ENCODE measurements at regions of chr2 and their contacts with region 1.

Region 1: DNA sequence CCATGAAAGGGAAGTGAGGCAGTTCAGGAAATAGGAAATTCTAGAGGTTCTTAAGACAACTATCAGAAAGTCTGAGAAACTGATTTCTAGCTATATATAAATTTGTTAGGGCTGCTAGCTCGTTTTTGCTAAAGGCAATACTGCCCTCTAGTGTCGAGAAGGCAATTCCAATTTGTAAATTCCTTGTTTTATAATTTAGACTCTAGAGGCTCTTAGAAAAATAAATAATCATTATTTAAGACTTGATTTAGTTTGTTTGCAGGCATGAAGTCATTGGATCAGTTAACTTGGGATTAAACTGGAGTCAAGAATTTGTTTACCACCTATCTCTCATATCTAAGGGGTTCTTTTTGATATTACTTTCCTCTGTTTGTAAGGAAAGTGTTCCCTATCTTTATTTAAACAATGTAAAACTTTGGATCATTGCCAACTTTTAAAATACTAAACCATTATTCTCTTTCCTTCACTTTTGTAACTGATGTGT is 66.2 kb downstream of the ACVR2A start:
- DNase-seq: peak; percentile 34
- H3K4me3 ChIP-seq: no peak overlapping the region
- H3K27ac ChIP-seq: no peak overlapping the region
- H3K4me1 ChIP-seq: no peaks in the 10 kb centered on the region
- H3K27me3 ChIP-seq: no peaks in the 10 kb centered on the region
- CTCF ChIP-seq: peak; percentile 71 to 90 (median 83)
- POLR2A ChIP-seq: no peak

Region 2: DNA sequence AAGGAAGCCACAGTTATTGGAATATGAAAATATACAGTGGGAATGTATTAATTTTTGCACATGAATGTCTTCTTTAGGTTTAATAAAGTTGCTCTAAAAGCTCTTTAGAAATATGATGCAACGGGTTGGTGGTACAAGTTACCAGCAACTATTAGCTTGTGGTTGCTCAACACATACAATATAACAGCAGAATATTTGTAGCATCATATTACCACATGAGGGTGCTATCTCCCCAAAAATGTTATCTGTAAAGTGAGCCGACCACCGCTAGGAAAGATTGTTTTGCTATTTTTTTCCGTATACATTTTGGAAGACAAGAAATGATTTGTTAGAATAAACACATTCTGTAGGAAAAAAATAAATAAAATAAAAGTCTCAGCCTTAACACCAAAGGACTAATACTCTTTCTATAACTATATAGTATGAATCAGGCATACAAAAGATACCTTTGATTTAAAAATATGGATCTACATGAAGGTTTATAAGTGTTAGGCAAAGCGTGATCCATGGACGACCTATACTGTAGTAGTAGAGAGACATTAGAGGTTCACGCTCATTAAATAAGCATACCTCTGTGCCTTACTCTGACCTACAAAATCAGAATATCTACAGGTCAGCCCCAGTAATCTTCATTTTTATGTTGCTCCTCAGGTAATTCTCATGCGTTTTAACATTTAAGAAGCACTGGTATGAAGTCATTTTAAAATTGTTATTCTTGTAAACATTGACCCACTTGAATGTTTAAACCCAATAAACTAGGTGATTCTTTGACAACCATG is 1176.8 kb before region 1 on chr2:
- intact Hi-C with region 1: loop called (anchors 10 kb)
- DNase-seq: no peak
- H3K4me3 ChIP-seq: no peak overlapping the region
- H3K27ac ChIP-seq: no peak overlapping the region
- H3K4me1 ChIP-seq: no peaks in the 10 kb centered on the region
- H3K27me3 ChIP-seq: no peaks in the 10 kb centered on the region
- CTCF ChIP-seq: peak in 3 of 4 experiments; percentile 44 to 68 (median 55)
- POLR2A ChIP-seq: no peak

Region 3: DNA sequence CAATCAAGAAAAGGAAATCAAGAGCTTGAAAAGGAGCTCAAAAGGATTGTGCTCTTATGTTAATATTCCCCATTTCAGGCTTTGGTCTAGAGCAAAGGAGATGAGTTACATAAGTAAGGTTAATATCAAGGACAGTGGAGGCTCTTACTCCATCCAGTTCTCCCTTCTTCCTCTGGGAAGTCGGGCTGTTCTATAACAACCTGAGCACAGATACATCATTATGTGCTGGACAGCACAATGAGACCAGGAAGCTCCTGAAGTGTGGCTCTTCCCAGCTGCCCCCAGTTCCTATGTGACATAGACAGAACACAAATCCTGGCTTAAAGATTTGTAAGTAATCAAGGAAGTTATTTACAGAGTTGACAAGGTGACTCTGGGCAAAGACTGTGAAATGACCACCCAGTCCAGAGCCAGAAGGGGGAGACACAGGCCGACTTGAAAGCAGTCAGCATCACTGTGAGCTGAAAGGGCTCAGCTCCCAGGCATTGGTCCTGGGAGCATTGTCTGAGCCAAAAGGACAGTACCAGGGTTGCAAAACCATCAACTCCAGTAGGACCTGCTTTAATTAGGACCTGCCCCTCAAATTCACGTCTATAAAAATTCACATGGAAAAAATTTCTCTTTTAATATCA is 983.8 kb before region 1 on chr2:
- intact Hi-C with region 1: loop called (anchors 5 kb)
- DNase-seq: peak; percentile 39
- H3K4me3 ChIP-seq: no peak overlapping the region
- H3K27ac ChIP-seq: no peak overlapping the region
- H3K4me1 ChIP-seq: no peaks in the 10 kb centered on the region
- H3K27me3 ChIP-seq: no peaks in the 10 kb centered on the region
- CTCF ChIP-seq: peak in 3 of 4 experiments; percentile 19 to 48 (median 47)
- POLR2A ChIP-seq: no peak

Region 4: GRCh38 chr2:147331790-147332419 is 579.1 kb before region 1 on chr2:
- intact Hi-C with region 1: loop called (anchors 10 kb)
- DNase-seq: no peak
- H3K4me3 ChIP-seq: no peak overlapping the region
- H3K27ac ChIP-seq: no peak overlapping the region
- H3K4me1 ChIP-seq: no peaks in the 10 kb centered on the region
- H3K27me3 ChIP-seq: no peaks in the 10 kb centered on the region
- CTCF ChIP-seq: peak in 3 of 4 experiments; percentile 38 to 45 (median 38)
- POLR2A ChIP-seq: no peak

Region 5: DNA sequence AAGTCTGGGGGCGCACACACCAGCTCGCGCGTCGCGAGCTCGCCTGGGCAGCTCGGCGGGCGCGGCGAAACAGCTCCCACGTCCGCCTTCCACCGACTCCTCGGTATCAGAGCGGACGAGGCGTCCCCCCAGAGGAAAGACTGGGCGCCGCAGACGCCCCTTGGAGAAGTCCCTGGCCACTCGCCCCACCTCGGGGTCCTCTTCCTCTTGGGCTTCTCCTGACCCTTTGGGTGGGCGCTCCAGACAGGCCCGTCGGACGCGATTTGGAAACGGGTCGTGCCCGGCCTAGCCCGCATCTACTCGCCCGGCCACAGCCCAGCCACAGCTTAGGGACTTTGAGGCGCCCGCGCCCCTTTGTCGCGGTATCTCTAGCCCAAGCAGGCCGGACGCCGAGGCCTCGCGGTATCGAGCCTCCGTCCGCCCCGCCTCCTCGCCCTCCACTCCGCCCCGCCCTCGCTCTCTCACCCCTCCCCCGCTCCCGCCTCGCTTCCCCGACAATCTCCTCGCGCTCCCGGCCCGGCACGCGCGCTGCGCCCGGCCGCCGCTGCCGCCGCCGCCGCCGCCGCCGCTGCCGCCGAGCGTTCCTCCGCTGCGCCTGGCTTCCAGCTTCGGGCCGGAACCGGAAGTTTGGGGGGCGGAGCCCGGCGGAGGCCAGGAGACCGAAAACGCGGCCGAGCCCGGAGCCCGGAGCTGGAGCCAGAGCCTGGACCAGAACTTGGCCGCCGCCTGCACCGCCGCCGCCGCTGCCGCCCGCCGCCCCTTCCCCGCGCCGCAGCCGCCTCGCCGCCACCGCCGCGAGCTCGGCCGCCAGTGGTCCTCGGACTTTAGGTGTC is 67.0 kb before region 1 on chr2:
- intact Hi-C with region 1: loop called (anchors 10 kb)
- DNase-seq: peak; percentile 90
- H3K4me3 ChIP-seq: peak overlapping the region; percentile 48 to 79
- H3K27ac ChIP-seq: peak overlapping the region; percentile 91 to 99
- H3K4me1 ChIP-seq: no peaks in the 10 kb centered on the region
- H3K27me3 ChIP-seq: no peaks in the 10 kb centered on the region
- CTCF ChIP-seq: peak in 2 of 4 experiments; percentile 24 to 51
- POLR2A ChIP-seq: peak; percentile 29

Measured in prostate gland (tissue), 2 donors.